ENCODE measurements at regions of chr15 and their contacts with region 1.

Region 1: GRCh38 chr15:31031471-31032067 is 40.1 kb upstream of the MTMR10 start:
- DNase-seq: no peak
- ATAC-seq: peak in 6 of 8 donors; percentile 45 to 88 (median 84)
- H3K4me3 ChIP-seq: no peak overlapping the region
- H3K27ac ChIP-seq: peak overlapping the region in 1 of 10 donors; percentile 39
- H3K4me1 ChIP-seq: peaks cover 0 to 22% (median 16%) of the 10 kb centered on the region in 9 donors
- H3K27me3 ChIP-seq: peaks cover 0 to 8% (median 0%) of the 10 kb centered on the region in 7 donors
- CTCF ChIP-seq: no peak

Region 2: GRCh38 chr15:30991255-30992072 is 40.1 kb before region 1 on chr15 and contains the start of gene MTMR10:
- intact Hi-C with region 1: loop called in 1 of 10 experiments (anchors 5 kb)
- DNase-seq: peak; percentile 78 to 82
- ATAC-seq: peak; percentile 94 to 98 (median 96)
- H3K4me3 ChIP-seq: peak within 1 kb of the TSS; percentile 55 to 97 (median 94)
- H3K27ac ChIP-seq: peak within 1 kb of the TSS; percentile 80 to 99 (median 95)
- H3K4me1 ChIP-seq: peaks cover 0 to 51% (median 46%) of the 10 kb centered on the region in 9 donors
- H3K27me3 ChIP-seq: no peaks in the 10 kb centered on the region
- CTCF ChIP-seq: no peak
- total RNA-seq, gene MTMR10: 17.3 to 50.1 (median 30.2) TPM

Region 3: DNA sequence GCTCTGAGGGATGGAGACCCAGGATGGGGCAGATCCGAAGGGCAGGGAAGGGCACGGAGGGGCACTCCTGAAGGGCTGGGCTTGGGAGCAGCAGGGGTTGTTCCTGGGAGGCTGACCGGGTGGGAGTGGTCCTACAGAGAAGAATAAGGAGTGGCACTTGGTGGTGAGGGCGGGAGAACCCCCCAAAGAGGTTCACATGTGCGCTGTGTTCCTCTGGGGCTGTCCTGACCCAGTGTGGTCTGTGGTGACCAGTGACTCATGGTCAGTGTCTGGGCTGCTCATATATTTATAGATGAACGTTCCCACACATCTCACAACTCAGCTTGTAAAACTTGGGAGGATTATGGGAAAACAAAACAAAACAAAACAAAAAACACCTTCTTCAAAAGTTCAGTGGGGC is 59.9 kb after region 1 on chr15:
- intact Hi-C with region 1: no loop called
- DNase-seq: no peak
- ATAC-seq: no peak
- H3K4me3 ChIP-seq: no peak overlapping the region
- H3K27ac ChIP-seq: no peak overlapping the region
- H3K4me1 ChIP-seq: no peaks in the 10 kb centered on the region
- H3K27me3 ChIP-seq: peaks cover 0 to 3% (median 0%) of the 10 kb centered on the region in 7 donors
- CTCF ChIP-seq: no peak

Region 4: DNA sequence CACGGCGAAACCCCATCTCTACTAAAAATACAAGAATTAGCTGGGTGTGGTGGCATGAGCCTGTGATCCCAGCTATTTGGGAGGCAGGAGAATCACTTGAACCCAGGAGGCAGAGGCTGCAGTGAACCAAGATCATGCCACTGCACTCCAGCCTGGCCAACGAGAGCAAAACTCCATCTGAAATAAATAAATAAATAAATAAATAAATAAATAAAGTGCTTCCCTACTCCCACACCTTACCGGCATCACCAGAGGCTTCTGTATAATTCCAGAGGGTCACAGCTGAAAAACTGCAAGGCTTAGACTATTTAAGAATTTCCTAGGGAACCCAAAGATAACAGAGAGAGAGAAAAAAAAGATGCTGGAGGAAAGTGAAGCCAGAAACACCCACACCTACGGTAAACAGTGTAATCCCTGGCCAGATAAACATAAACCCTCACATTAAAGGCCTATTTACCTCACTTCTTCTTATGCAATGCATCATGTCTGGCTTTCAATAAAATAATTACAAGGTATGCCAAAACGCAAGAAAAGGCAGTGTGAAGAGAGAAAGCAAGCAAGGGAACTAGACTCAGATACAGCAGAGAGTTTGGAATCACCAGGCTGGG is 85.0 kb after region 1 on chr15:
- intact Hi-C with region 1: no loop called
- DNase-seq: no peak
- ATAC-seq: no peak
- H3K4me3 ChIP-seq: no peak overlapping the region
- H3K27ac ChIP-seq: no peak overlapping the region
- H3K4me1 ChIP-seq: no peaks in the 10 kb centered on the region
- H3K27me3 ChIP-seq: no peaks in the 10 kb centered on the region
- CTCF ChIP-seq: no peak